ENCODE measurements at regions of chr16 and their contacts with region 1.

Region 1: GRCh38 chr16:48156790-48157209 is 1.0 kb upstream of the ABCC12 start:
- DNase-seq: peak; percentile 73 to 86
- H3K4me3 ChIP-seq: no peak overlapping the region
- H3K4me3 Mint-ChIP-seq: no peak overlapping the region
- H3K27ac Mint-ChIP-seq: no peak overlapping the region
- H3K4me1 ChIP-seq: no peaks in the 10 kb centered on the region
- H3K4me1 Mint-ChIP-seq: no peaks in the 10 kb centered on the region
- H3K27me3 ChIP-seq: no peaks in the 10 kb centered on the region
- H3K27me3 Mint-ChIP-seq: no peaks in the 10 kb centered on the region
- CTCF ChIP-seq: peak; percentile 87 to 90

Region 2: DNA sequence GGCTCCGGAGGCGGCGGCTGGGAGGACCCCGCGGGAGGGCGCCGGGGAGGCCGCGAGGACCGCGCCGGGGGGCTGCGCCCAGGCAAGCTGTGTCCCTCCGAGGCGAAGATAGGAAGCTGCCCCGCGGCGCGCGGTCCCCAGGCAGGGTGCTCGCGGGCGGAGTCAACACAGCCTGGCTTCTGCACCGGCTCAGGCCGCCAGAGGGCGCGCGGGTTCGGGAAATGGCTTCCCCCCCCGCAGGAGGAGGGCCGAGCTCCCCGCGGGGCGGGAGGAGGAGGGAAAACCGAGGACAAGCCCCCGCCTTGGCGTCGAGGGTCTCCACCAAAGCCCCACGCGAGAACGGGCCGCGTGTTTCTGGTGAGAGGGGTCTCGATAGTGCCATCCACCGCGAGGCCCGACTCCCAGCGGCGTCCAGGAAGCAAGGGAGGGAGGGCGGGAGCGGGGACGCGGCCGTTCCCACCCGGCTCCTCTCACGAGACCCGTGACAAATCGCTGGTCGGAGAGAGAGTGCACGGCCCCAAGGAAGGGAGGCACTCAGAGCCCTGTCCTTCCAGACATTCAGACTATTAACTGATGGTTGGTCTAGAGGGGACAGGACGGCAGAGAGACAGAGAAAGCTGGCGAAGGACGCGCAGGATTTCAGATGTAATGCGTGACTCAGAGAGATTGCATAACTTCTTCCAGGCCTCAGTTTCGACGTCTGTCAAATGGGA is 1118.9 kb before region 1 on chr16:
- CTCF ChIA-PET with region 1: no interaction called
- POLR2A ChIA-PET with region 1: no interaction called
- intact Hi-C with region 1: loop called (anchors 2 kb)
- DNase-seq: peak; percentile 84 to 93
- H3K4me3 ChIP-seq: peak overlapping the region; percentile 69
- H3K4me3 Mint-ChIP-seq: peak overlapping the region; percentile 75
- H3K27ac Mint-ChIP-seq: no peak overlapping the region
- H3K4me1 ChIP-seq: no peaks in the 10 kb centered on the region
- H3K4me1 Mint-ChIP-seq: no peaks in the 10 kb centered on the region
- H3K27me3 ChIP-seq: no peaks in the 10 kb centered on the region
- H3K27me3 Mint-ChIP-seq: peaks cover 2% of the 10 kb centered on the region
- CTCF ChIP-seq: peak; percentile 87 to 92

Region 3: DNA sequence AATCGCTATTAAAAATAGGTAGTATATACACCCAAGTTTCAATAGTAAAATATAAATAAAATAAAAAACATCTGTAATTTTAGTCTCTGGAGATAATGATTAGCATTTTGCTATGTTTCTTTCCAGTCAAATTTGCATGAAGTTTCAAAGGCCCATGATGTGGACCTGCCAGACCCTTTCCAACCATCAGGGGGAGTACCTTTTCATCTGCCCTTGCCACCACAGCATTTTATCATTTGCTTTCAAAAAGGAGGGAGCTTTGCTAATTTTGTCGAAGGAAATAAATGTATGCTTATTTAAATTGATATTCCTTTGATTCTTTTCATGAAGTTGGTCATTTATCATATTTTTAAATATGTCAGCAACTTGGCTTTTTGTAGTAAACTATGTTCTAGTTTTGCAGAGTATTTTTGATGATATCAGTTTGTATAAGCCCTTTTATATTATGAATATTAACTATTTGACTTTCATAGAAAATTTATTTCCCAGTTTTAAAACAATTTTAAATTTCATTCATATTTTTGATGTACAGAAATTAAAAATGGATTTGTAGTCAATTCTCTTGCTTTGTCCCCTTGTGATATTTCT is 897.8 kb before region 1 on chr16:
- CTCF ChIA-PET with region 1: no interaction called
- POLR2A ChIA-PET with region 1: no interaction called
- intact Hi-C with region 1: loop called (anchors 2 kb)
- DNase-seq: peak in 1 of 2 experiments; percentile 36
- H3K4me3 ChIP-seq: no peak overlapping the region
- H3K4me3 Mint-ChIP-seq: no peak overlapping the region
- H3K27ac Mint-ChIP-seq: no peak overlapping the region
- H3K4me1 ChIP-seq: no peaks in the 10 kb centered on the region
- H3K4me1 Mint-ChIP-seq: no peaks in the 10 kb centered on the region
- H3K27me3 ChIP-seq: no peaks in the 10 kb centered on the region
- H3K27me3 Mint-ChIP-seq: no peaks in the 10 kb centered on the region
- CTCF ChIP-seq: peak; percentile 61 to 71

Region 4: GRCh38 chr16:48117217-48118105 is 39.3 kb before region 1 on chr16:
- CTCF ChIA-PET with region 1: no interaction called
- POLR2A ChIA-PET with region 1: no interaction called
- intact Hi-C with region 1: loop called (anchors 1 kb)
- DNase-seq: peak; percentile 78 to 81
- H3K4me3 ChIP-seq: no peak overlapping the region
- H3K4me3 Mint-ChIP-seq: no peak overlapping the region
- H3K27ac Mint-ChIP-seq: no peak overlapping the region
- H3K4me1 ChIP-seq: no peaks in the 10 kb centered on the region
- H3K4me1 Mint-ChIP-seq: no peaks in the 10 kb centered on the region
- H3K27me3 ChIP-seq: no peaks in the 10 kb centered on the region
- H3K27me3 Mint-ChIP-seq: no peaks in the 10 kb centered on the region
- CTCF ChIP-seq: peak; percentile 90 to 94

Region 5: DNA sequence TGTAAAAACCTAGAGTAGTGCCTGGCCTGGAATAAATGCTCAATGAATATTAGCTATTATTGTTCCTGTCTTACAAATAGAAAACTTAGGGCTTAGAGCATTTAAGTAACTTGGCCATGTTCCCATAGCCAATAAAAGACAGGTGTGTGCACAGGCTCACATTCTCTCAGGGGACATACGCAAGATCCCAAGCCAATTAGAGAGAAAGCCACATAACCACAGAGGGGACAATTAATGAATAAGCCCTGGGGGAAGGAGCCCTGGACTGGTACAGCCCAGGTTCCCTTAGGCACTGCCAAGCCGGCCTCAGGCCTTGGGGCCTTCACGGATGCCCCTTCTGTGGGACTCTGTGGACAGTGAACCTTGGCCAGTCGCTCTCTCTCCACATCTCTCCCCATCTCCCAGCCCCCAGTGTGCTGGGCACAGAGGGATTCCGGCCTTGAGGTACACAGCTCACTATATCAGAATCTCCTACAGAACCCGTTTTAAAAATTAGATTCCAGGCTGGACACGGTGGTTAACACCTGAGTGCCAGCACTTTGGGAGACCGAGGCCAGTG is 26.3 kb after region 1 on chr16:
- CTCF ChIA-PET with region 1: no interaction called
- POLR2A ChIA-PET with region 1: no interaction called
- intact Hi-C with region 1: no loop called
- DNase-seq: no peak
- H3K4me3 ChIP-seq: no peak overlapping the region
- H3K4me3 Mint-ChIP-seq: no peak overlapping the region
- H3K27ac Mint-ChIP-seq: no peak overlapping the region
- H3K4me1 ChIP-seq: no peaks in the 10 kb centered on the region
- H3K4me1 Mint-ChIP-seq: peaks cover 8% of the 10 kb centered on the region
- H3K27me3 ChIP-seq: no peaks in the 10 kb centered on the region; the same call in 1 of the 2 replicates
- H3K27me3 Mint-ChIP-seq: peaks cover 4% of the 10 kb centered on the region
- CTCF ChIP-seq: no peak

Measured in Caco-2 (cell line).